ENCODE measurements at regions of chr11 and their contacts with region 1.

Region 1: DNA sequence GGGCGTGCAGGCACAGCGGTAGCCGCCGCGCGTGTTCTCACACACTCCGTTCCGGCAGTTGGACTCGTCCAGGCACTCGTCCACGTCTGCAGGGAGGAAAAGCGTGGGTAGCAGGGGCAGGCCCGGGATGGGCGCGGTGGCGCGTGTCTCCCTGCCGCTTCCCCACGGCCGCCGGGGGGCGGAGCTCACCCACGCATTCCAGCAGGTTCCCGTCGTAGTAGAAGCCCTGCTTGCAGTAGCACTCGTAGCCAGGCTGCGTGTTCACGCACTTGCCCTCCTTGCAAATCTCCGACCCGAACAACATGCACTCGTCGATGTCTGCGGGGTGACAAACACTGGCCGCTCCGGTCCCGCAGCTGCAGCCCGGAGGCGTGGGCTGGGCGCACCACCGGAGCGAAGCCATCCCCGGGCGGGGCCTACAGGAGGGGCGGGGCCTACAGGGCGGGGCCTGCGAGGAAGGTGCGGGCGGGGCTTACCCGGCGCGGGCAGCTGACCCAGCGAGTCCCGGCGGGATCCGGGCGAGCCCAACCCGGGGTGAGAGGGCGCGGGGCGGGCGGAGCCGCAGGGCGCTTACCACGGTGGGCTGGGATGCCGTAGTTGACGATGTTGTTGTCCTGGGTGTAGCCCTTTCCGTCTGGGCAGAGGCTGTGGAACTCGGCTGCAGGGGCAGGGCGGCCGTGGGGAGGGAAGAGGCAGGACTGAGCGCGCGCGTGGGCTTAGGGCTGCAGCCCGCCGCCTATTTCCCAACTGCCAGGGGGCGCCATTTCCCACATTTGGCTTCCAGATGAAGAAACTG is 15.6 kb downstream of the SCYL1 start:
- DNase-seq: peak; percentile 86
- H3K4me3 Mint-ChIP-seq: peak overlapping the region; percentile 81
- H3K27ac Mint-ChIP-seq: peak overlapping the region; percentile 70
- H3K4me1 Mint-ChIP-seq: peaks cover 18% of the 10 kb centered on the region
- H3K27me3 Mint-ChIP-seq: no peaks in the 10 kb centered on the region

Region 2: GRCh38 chr11:65524741-65525545 is 15.6 kb before region 1 on chr11 and contains the start of gene SCYL1:
- intact Hi-C with region 1: loop called (anchors 2 kb)
- DNase-seq: peak; percentile 74
- H3K4me3 Mint-ChIP-seq: peak within 1 kb of the TSS; percentile 80
- H3K27ac Mint-ChIP-seq: peak within 1 kb of the TSS; percentile 86
- H3K4me1 Mint-ChIP-seq: peaks cover 38% of the 10 kb centered on the region
- H3K27me3 Mint-ChIP-seq: no peaks in the 10 kb centered on the region
- total RNA-seq, gene SCYL1: 94.4 and 95.8 TPM in 2 replicates

Region 3: GRCh38 chr11:65588199-65589054 is 47.9 kb after region 1 on chr11:
- intact Hi-C with region 1: loop called (anchors 2 kb)
- DNase-seq: peak; percentile 70
- H3K4me3 Mint-ChIP-seq: peak overlapping the region; percentile 69
- H3K27ac Mint-ChIP-seq: peak overlapping the region; percentile 93
- H3K4me1 Mint-ChIP-seq: peaks cover 37% of the 10 kb centered on the region
- H3K27me3 Mint-ChIP-seq: no peaks in the 10 kb centered on the region

Measured in activated T-helper 2 cell treated with anti-CD3 and anti-CD28 coated beads, Interferon-gamma antibody, Interleukin-2, Interleukin-4, amounts not matched to agents 10 μg/mL and 5 μg/mL and 100 μg/mL, durations not matched to agents 14 hours and 24 hours and 36 hours (primary cell).